ENCODE measurements at regions of chr9 and their contacts with region 1.

Region 1: GRCh38 chr9:100011062-100011681 is 87.6 kb downstream of the ERP44 start:
- DNase-seq: peak; percentile 51
- CTCF ChIP-seq: peak; percentile 27

Region 2: DNA sequence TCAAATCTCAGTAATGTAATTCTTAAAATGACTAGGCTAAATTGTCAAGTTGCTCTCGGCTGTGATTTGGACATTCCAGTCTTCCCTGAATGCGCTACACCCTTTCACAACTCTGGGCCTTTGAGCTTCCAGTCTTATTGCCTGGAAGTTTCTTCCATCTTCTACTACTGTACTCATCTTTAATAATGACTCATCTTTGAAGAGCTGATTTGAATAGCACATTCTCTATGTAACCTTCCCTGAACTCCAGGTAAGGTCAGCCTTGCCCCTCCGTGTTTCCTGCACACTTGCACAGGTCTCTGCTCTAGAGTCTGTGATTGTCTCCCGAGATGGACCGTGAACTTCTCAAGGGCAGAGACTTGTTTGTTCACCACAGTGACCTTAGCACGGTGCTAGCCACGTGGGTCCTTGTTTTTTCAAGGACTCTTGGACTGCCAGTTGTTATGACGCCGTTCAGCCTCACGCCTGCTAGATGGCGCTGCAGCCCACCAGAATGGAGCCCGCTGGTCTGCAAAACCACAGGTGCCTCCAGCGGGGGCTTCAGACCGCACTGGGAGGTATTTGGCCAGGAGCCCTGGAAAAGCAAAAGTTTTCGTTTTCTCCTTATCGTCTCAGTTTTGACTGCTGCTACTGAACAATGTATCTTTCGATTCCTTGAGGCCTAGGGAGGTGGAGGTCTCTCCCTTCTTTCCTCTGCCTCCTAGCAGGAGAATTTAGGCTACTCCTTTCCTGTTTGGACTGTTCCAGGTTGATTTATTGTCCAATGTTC is 744.7 kb before region 1 on chr9:
- in situ Hi-C with region 1: loop called (anchors 25 kb)
- DNase-seq: peak; percentile 62
- CTCF ChIP-seq: peak; percentile 87

Region 3: GRCh38 chr9:100111235-100111634 is 100.1 kb after region 1 on chr9:
- in situ Hi-C with region 1: no loop called
- DNase-seq: no peak
- CTCF ChIP-seq: no peak

Region 4: DNA sequence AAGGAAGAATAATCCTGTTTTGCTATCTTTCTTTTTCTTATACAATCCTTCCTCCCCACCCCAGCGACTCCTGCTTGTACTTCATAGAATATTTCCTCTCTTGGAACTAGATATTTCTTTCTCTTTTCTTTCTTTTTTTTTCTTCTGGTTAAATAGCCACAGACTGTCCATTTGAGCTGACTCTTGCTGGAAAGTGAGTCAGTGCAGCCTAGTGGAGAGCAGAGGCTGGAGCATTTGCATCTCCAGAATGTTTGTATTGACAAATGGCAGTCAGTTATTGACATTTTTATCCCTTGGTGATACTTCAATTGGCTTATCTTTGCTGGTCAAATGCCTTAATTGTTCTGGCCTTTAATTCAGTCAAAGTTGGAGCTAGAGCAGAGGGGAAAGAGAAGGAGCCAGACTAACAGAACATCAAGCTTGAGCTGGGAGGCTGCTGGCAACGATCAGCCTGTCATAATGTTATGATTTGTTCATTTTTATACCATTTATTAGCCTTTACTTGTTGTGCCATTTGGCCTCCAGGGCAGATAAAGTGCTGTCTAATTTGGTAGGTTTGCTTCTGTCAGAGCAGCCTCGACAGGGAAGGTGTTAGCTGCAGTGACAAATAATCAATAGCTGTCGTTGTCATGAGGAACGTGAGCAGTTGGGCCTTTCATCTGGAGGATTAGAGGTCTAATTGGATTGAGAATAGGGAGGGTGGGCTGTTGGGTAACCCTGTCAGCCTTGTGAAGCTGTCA is 156.9 kb after region 1 on chr9:
- in situ Hi-C with region 1: no loop called
- DNase-seq: no peak
- CTCF ChIP-seq: no peak